Activated naive CD4-positive, alpha-beta T cell treated with anti-CD3 and anti-CD28 coated beads for 36 hours (primary cell): ENCODE measurements at regions of chr14 and their contacts with region 1.

Region 1: GRCh38 chr14:22766456-22767322 is at the start of gene OXA1L:
- DNase-seq: peak; percentile 99
- H3K4me3 Mint-ChIP-seq: peak within 1 kb of the TSS; percentile 83
- H3K27ac Mint-ChIP-seq: peak within 1 kb of the TSS; percentile 95
- H3K4me1 Mint-ChIP-seq: peaks cover 31% of the 10 kb centered on the region
- H3K27me3 Mint-ChIP-seq: no peaks in the 10 kb centered on the region
- total RNA-seq, gene OXA1L: 149 to 152 TPM

Region 2: DNA sequence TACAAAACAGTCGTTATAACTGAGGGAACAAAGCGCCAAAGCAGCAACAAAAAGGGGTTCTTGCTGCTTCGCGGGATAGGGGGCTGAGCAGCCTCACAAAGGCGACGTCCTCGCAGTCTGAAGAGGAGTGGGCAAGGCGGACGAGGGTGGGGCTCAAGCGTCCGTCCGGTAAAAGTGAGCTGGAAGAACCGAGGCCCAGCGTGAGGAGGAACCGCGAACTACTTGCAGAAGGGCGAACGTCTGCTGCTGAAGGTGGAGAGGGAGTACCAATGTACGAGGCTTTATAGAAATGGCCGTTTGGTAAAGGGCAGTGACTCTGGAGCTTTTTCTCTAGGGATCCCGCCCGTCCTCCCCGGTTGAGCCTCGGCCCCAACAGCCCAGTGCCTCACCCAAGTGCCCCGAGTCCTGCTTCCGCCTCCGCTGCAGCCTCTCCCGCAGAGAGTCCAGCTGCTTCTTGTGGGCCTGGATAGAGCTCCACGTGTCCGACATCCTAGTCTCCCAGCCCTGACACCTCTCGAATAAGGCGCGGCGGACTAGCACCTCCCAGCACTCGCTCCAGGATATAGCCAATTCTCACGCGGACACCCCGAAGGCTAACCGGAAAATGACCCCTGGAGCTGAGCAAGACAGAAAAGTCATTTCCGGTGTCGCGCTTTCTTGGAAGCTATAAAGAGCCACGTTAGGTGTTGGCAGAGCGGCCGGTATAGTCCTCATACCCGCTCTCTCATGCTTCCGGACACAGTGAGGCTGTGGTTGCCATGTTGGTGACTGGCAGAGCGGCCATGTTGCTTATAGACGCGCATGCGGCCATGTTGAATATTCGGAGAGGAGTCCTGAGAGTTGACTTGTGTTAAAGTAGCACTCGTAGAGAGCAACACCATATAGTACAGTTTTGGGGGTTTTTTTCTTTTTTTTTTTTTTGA is 1255.7 kb before region 1 on chr14 and contains the start of gene METTL3:
- CTCF ChIA-PET with region 1: no interaction called
- intact Hi-C with region 1: loop called (anchors 10 kb)
- DNase-seq: peak; percentile 96
- H3K4me3 Mint-ChIP-seq: peak within 1 kb of the TSS; percentile 96
- H3K27ac Mint-ChIP-seq: peak within 1 kb of the TSS; percentile 96
- H3K4me1 Mint-ChIP-seq: peaks cover 30% of the 10 kb centered on the region
- H3K27me3 Mint-ChIP-seq: no peaks in the 10 kb centered on the region
- total RNA-seq, gene METTL3: 60.6 TPM

Region 3: DNA sequence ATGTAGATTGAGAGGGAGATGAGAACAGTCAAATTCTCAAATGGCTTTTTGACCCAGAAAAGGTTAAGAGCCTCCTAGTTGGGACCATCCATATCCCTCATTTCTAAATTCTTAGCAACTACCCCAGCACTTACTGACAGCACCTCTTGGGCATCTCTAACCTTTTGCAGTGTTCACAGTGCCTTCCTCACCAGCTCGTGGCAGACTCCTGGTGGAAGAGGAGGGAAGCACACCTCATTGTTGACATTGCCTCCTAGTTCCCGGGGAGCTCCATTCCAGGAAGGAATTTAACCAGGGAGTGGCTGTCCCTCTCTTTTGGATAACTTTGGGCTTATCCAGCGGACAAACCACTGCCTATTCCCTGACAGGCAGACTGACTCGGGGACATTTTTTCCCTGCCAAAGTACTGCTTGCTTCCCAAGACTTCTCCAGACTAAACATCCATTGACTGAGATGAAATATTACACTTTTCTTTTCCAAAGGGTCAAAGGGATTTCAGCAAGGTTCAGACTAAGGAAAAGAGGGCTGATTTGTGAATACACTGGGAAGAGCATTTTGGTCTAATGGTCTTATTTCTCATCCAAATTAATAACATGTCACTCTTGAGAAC is 113.6 kb before region 1 on chr14:
- CTCF ChIA-PET with region 1: interaction called, 18 read pairs
- intact Hi-C with region 1: no loop called
- DNase-seq: peak; percentile 78
- H3K4me3 Mint-ChIP-seq: no peak overlapping the region
- H3K27ac Mint-ChIP-seq: no peak overlapping the region
- H3K4me1 Mint-ChIP-seq: no peaks in the 10 kb centered on the region
- H3K27me3 Mint-ChIP-seq: no peaks in the 10 kb centered on the region

Region 4: GRCh38 chr14:22737052-22737451 is 29.6 kb before region 1 on chr14:
- CTCF ChIA-PET with region 1: no interaction called
- intact Hi-C with region 1: loop called (anchors 1 kb)
- DNase-seq: peak; percentile 67
- H3K4me3 Mint-ChIP-seq: no peak overlapping the region
- H3K27ac Mint-ChIP-seq: no peak overlapping the region
- H3K4me1 Mint-ChIP-seq: peaks cover 7% of the 10 kb centered on the region
- H3K27me3 Mint-ChIP-seq: peaks cover 2% of the 10 kb centered on the region

Region 5: DNA sequence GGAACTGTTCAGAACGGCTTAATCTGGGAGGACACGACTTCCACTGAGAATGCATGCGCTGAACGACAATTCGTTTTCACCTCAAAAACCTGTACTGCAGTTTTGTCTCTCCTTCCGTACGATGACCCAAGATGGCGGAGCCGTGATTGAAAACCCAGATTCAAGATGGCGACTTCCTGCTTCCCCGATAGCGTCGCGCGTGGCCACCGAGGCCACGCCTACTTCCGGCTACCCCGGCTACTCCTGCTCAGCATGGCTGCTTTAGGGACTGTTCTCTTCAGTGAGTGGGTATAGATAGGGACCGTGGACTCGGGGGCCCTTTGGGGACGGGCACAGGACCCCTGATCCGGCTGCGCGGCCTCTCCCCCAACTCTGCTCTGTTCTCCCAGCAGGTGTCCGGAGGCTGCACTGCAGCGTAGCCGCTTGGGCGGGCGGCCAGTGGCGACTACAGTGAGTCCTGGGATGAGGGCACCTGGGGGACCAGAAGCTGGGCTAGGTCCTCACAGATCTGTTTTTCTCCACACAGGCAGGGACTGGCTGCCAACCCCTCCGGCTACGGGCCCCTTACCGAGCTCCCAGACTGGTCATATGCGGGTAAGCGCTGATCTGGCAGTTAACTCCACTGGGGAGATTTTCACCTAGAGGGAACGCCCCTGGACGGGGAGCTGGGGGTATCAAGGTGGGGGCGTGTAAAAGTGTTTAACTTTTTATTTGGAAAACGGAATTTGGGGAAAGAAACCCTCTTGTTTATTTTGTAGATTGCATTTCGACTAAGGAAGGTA is 63.2 kb after region 1 on chr14 and contains the start of gene MRPL52:
- CTCF ChIA-PET with region 1: no interaction called
- intact Hi-C with region 1: loop called (anchors 1 kb)
- DNase-seq: peak; percentile 94
- H3K4me3 Mint-ChIP-seq: peak within 1 kb of the TSS; percentile 94
- H3K27ac Mint-ChIP-seq: peak within 1 kb of the TSS; percentile 97
- H3K4me1 Mint-ChIP-seq: peaks cover 34% of the 10 kb centered on the region
- H3K27me3 Mint-ChIP-seq: no peaks in the 10 kb centered on the region
- total RNA-seq, gene MRPL52: 170 TPM

Region 6: GRCh38 chr14:22918804-22919600 is 152.3 kb after region 1 on chr14 and contains the start of gene RBM23:
- CTCF ChIA-PET with region 1: no interaction called
- intact Hi-C with region 1: loop called (anchors 1 kb)
- DNase-seq: peak; percentile 100
- H3K4me3 Mint-ChIP-seq: peak within 1 kb of the TSS; percentile 94
- H3K27ac Mint-ChIP-seq: peak within 1 kb of the TSS; percentile 99
- H3K4me1 Mint-ChIP-seq: peaks cover 42% of the 10 kb centered on the region
- H3K27me3 Mint-ChIP-seq: peaks cover 3% of the 10 kb centered on the region
- total RNA-seq, gene RBM23: 53.5 to 61.2 TPM

Region 7: DNA sequence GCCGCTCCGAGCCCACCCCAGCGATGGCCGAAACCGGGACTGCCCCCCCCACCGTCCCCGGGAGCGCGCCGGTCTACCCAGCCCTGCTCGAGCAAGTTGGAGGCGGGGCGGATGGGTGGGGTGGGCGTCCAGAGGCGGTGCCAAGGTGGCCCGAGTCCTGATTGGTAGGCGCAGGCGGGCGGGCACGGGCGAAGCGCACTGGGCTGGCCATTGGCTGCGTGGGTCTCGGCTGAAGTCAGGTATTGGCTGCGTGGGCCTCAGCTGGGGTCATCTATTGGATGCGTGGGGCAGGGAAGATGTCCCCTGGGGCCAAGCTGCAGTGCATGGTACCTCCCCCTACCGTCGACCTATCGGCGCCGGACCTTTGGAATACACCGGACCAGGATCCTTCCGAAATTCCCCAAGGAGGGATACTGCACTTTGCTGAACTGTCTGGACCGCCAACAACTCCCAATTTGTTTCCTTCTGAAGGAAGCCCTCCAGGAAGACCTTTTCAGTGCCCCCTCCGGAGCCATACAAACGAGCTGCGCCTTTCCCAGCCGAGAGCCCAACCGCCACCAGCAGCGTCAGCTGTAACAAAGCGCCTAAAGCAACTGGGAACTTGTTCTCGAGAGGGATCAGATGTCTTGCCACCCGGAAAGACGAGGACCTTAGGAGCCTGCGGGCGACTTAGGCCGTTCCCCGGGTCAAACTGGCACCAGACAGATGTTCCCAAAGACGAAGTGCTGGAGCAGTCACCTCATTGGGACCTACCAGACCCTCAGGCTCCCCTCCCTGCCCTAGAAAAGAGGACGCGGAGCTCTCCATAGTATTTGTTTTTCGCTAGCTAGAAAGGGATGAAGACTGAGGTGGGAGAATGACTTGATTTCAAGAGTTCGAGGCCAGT is 519.6 kb after region 1 on chr14 and contains the start of gene HOMEZ:
- CTCF ChIA-PET with region 1: no interaction called
- intact Hi-C with region 1: loop called (anchors 2 kb)
- DNase-seq: peak; percentile 99
- H3K4me3 Mint-ChIP-seq: peak within 1 kb of the TSS; percentile 99
- H3K27ac Mint-ChIP-seq: peak within 1 kb of the TSS; percentile 96
- H3K4me1 Mint-ChIP-seq: peaks cover 29% of the 10 kb centered on the region
- H3K27me3 Mint-ChIP-seq: no peaks in the 10 kb centered on the region
- total RNA-seq, gene HOMEZ: 6.3 to 7.8 TPM